ENCODE measurements at regions of chr1 and their contacts with region 1.

Region 1: DNA sequence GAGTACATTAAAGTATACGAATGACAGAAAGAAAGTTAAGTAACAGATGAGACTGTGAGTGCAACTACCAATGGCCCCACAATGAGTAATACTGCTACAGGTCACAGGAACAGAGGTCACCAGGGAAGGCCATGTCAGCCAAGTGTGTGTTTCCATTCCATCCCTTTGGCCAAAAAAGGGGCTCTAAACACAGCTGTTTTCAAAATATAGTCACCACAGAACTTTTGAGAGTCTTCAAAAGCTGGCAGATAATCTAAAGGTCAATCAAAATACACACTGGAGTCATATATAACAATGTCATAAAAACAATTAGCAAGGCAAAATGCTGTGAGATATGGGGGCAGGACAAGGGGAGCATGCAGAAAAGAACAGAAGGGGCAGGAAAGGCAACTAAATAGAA is 10.2 kb downstream of the USP24 start:
- DNase-seq: peak; percentile 33
- H3K4me3 Mint-ChIP-seq: no peak overlapping the region
- H3K27ac Mint-ChIP-seq: peak overlapping the region; percentile 47
- H3K4me1 Mint-ChIP-seq: peaks cover 72% of the 10 kb centered on the region
- H3K27me3 Mint-ChIP-seq: no peaks in the 10 kb centered on the region

Region 2: GRCh38 chr1:55127827-55128343 is 77.1 kb before region 1 on chr1:
- CTCF ChIA-PET with region 1: no interaction called
- POLR2A ChIA-PET with region 1: no interaction called
- intact Hi-C with region 1: loop called (anchors 2 kb)
- DNase-seq: peak; percentile 35
- H3K4me3 Mint-ChIP-seq: no peak overlapping the region
- H3K27ac Mint-ChIP-seq: peak overlapping the region; percentile 79
- H3K4me1 Mint-ChIP-seq: peaks cover 33% of the 10 kb centered on the region
- H3K27me3 Mint-ChIP-seq: no peaks in the 10 kb centered on the region

Region 3: GRCh38 chr1:55164906-55165305 is 40.1 kb before region 1 on chr1:
- CTCF ChIA-PET with region 1: no interaction called
- POLR2A ChIA-PET with region 1: no interaction called
- intact Hi-C with region 1: loop called (anchors 1 kb)
- DNase-seq: no peak
- H3K4me3 Mint-ChIP-seq: no peak overlapping the region
- H3K27ac Mint-ChIP-seq: peak overlapping the region; percentile 69
- H3K4me1 Mint-ChIP-seq: peaks cover 41% of the 10 kb centered on the region
- H3K27me3 Mint-ChIP-seq: no peaks in the 10 kb centered on the region

Region 4: GRCh38 chr1:55185832-55186231 is 19.2 kb before region 1 on chr1:
- CTCF ChIA-PET with region 1: no interaction called
- POLR2A ChIA-PET with region 1: no interaction called
- intact Hi-C with region 1: no loop called
- DNase-seq: no peak
- H3K4me3 Mint-ChIP-seq: no peak overlapping the region
- H3K27ac Mint-ChIP-seq: peak overlapping the region; percentile 63
- H3K4me1 Mint-ChIP-seq: peaks cover 59% of the 10 kb centered on the region
- H3K27me3 Mint-ChIP-seq: no peaks in the 10 kb centered on the region

Measured in activated CD4-positive, alpha-beta memory T cell treated with anti-CD3 and anti-CD28 coated beads for 36 hours (primary cell).